ENCODE measurements at regions of chr3 and their contacts with region 1.

Region 1: DNA sequence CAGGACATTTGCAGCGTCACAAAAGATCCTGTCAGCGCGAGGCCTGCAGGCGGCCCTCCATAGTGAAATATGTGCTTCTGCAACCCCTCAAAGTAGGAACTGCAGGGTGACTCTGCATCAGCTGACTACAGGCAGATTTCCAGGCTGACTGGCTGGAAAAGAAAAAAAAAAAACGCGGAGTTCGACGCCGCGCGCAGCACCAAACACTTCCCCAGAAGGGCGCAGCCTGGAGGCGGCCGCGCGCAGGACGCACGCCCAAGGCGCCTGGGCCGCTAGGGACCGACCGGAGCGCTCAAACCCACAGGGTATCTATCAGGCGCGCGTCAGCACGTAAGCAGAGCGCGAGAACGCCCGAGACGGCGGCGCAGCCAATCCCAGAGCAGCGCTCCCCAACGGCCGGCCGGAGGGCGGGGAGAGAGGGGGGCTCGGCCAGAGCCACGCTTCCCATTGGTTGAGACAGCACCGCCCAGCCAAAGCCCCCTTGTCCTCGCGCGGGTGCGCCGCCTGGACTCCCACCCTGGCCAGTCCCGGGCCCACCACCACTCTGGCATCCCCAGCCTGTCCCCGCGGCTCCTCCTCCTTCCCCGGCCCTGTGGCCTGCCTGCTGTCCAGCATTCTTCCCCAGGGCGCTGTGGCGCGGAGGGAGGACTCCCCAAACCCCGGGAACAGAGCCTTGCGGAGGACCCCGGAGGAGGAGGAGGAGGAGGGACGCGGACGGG is 1.0 kb downstream of the BDH1 start:
- DNase-seq: peak; percentile 82 to 89 (median 87)
- H3K4me3 ChIP-seq: peak overlapping the region; percentile 71 to 84
- H3K4me3 Mint-ChIP-seq: peak overlapping the region; percentile 90 to 95 (median 93)
- H3K27ac ChIP-seq: peak overlapping the region; percentile 74
- H3K27ac Mint-ChIP-seq: peak overlapping the region; percentile 71 to 95 (median 88)
- H3K4me1 ChIP-seq: peaks cover 14% of the 10 kb centered on the region
- H3K4me1 Mint-ChIP-seq: peaks cover 9 to 19% (median 15%) of the 10 kb centered on the region in 4 donors
- H3K27me3 ChIP-seq: no peaks in the 10 kb centered on the region
- H3K27me3 Mint-ChIP-seq: peaks cover 4 to 6% of the 10 kb centered on the region in 2 donors

Region 2: DNA sequence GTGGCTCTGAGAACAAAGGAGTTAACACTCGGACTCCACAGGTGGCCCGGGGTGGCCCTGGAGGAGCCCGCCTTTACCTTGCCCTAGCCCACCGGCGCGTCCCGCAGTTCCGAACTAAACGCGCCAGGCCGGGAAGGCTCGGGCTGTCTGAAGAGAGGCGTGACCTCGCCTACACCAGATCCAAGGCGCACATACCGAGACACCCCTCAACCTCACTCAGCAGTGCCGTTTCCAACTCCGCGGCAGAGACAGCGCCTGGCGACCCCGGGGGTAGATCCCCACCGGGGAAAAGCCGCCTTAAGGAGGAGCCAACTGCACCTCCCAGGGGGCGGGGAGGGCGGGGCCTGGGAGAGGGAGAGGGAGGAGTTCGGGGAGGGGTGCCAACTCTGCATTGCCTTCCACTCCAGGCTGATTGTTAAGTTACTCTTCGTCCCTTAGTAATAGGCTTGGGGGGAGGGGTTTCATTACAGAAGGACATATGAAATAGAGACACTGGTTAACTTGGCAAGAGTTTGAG is 256.3 kb before region 1 on chr3 and contains the start of gene DLG1:
- CTCF ChIA-PET with region 1: no interaction called
- POLR2A ChIA-PET with region 1: no interaction called
- intact Hi-C with region 1: loop called (anchors 1 kb)
- DNase-seq: peak in 4 of 5 donors; percentile 58 to 85 (median 66)
- H3K4me3 ChIP-seq: peak within 1 kb of the TSS; percentile 80 to 89
- H3K4me3 Mint-ChIP-seq: peak within 1 kb of the TSS; percentile 88 to 99 (median 95)
- H3K27ac ChIP-seq: peak within 1 kb of the TSS; percentile 73
- H3K27ac Mint-ChIP-seq: peak within 1 kb of the TSS; percentile 87 to 98 (median 96)
- H3K4me1 ChIP-seq: peaks cover 32% of the 10 kb centered on the region
- H3K4me1 Mint-ChIP-seq: peaks cover 15 to 41% (median 31%) of the 10 kb centered on the region in 4 donors
- H3K27me3 ChIP-seq: no peaks in the 10 kb centered on the region
- H3K27me3 Mint-ChIP-seq: peaks cover 2 to 8% of the 10 kb centered on the region in 2 donors
- total RNA-seq, gene DLG1: 86.8 to 92.1 TPM

Region 3: DNA sequence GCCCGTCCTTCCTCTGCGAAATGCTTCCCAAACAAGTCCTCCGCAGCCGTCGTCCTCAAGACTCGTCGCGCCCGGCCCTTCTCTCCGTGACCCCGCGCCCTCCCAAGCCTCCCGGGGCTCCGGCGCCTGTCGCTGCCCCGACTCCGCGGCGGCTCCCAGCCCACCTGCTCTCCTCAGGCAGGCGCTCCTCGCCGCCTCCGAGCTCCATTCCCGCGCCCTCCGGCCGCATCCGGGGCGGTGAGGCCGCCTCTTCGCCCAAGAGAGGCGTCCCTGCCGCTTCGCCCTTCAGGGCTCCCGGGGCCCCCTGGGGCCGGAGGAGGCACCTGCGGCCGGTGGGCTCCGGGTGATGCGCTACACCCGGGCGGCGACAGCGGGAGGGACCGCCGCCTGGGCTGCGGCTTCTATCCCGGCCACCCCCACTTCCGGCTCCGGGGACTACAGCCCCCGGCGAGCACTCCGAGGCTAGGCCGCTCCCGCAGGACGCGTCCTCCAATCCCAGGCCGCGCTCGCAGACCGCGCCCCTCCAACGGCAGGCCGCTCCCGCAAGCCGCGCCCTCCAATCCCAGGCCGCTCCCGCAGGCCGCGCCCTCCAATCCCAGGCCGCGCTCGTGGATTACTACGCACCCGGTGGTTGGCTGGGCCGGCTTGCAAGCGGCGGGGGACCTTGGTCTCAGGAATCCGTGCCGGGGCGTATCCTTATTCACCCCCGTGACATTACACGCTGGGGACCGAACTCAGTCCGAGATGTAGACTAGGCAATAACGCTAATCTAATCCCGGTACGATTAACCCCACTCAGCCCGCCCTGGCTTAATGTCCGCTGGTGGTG is 182.0 kb after region 1 on chr3 and contains the start of gene RUBCN:
- CTCF ChIA-PET with region 1: no interaction called
- POLR2A ChIA-PET with region 1: no interaction called
- intact Hi-C with region 1: loop called (anchors 2 kb)
- DNase-seq: peak; percentile 93 to 94 (median 94)
- H3K4me3 ChIP-seq: peak within 1 kb of the TSS; percentile 62 to 87
- H3K4me3 Mint-ChIP-seq: peak within 1 kb of the TSS; percentile 95 to 99 (median 98)
- H3K27ac ChIP-seq: peak within 1 kb of the TSS; percentile 80
- H3K27ac Mint-ChIP-seq: peak within 1 kb of the TSS; percentile 89 to 99 (median 98)
- H3K4me1 ChIP-seq: peaks cover 33% of the 10 kb centered on the region
- H3K4me1 Mint-ChIP-seq: peaks cover 24 to 47% (median 32%) of the 10 kb centered on the region in 4 donors
- H3K27me3 ChIP-seq: no peaks in the 10 kb centered on the region
- H3K27me3 Mint-ChIP-seq: no peaks in the 10 kb centered on the region
- total RNA-seq, gene RUBCN: 64.0 to 69.6 TPM

Measured in CD4-positive, alpha-beta memory T cell (primary cell).